ENCODE measurements at regions of chr14 and their contacts with region 1.

Region 1: GRCh38 chr14:62674563-62675237 is 370.6 kb downstream of the KCNH5 start:
- DNase-seq: no peak
- ATAC-seq: 0 out of 3 replicates have a peak, but pooled peaks have one; percentile 39
- H3K4me3 ChIP-seq: no peak overlapping the region
- H3K27ac ChIP-seq: no peak overlapping the region
- H3K4me1 ChIP-seq: no peaks in the 10 kb centered on the region
- H3K27me3 ChIP-seq: no peaks in the 10 kb centered on the region; a peak in 2 of 5 replicates
- CTCF ChIP-seq: no peak
- EP300 ChIP-seq: no peak
- POLR2A ChIP-seq: no peak
- RAD21 ChIP-seq: no peak

Region 2: GRCh38 chr14:62654641-62655040 is 20.1 kb before region 1 on chr14:
- CTCF ChIA-PET with region 1: no interaction called
- POLR2A ChIA-PET with region 1: no interaction called
- in situ Hi-C with region 1: no loop called
- intact Hi-C with region 1: no loop called
- DNase-seq: no peak
- ATAC-seq: no peak
- H3K4me3 ChIP-seq: no peak overlapping the region
- H3K27ac ChIP-seq: no peak overlapping the region
- H3K4me1 ChIP-seq: no peaks in the 10 kb centered on the region
- H3K27me3 ChIP-seq: no peaks in the 10 kb centered on the region; a peak in 1 of 5 replicates
- CTCF ChIP-seq: no peak
- EP300 ChIP-seq: no peak
- POLR2A ChIP-seq: no peak
- RAD21 ChIP-seq: no peak

Region 3: DNA sequence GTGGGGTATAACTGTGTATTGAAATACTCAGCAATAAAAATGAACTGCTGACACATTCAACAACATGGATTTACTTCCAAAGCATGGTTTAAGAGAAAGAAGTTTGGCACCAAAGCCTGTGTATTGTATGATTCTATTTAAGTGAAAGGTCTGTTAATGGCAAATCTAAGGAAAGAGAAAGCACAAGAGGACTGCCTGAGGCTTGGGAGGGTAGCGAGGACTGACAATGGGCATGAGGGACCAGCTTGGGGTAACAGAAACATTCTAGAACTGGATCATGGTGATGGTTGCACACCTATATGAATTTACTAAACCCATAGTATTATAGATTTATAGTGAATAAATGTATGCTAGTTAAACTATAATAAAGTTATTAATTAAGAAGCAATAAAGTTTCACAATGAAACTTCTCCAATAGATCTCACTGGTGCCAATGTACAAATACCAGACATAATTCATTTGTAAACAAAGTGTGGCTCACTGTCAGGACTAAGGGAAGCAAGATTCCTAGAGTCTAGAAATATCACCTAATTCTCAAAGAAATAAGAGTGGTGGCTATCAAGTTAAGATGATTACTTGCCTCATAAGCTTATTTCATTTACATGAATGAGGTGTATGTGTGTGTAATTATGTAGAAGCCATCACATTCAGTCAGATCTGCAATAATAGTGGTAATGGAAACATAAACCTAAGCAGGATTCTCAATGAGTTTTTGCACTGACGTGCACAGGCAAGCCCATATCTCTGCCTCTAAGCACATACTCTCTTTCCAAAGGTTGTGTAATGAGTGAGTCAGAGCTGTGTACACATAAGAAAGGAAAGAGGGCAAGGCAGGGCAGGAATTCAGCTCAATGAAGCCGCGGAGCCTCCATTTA is 17.1 kb after region 1 on chr14:
- CTCF ChIA-PET with region 1: no interaction called
- POLR2A ChIA-PET with region 1: no interaction called
- in situ Hi-C with region 1: no loop called
- intact Hi-C with region 1: loop called (anchors 1 kb)
- DNase-seq: peak; percentile 97
- ATAC-seq: peak; percentile 98
- H3K4me3 ChIP-seq: peak overlapping the region in 2 of 3 experiments; percentile 29 to 53; a peak in 2 of 6 replicates
- H3K27ac ChIP-seq: peak overlapping the region; percentile 92
- H3K4me1 ChIP-seq: peaks cover 72% of the 10 kb centered on the region
- H3K27me3 ChIP-seq: no peaks in the 10 kb centered on the region
- CTCF ChIP-seq: no peak
- EP300 ChIP-seq: peak; percentile 84 to 87
- POLR2A ChIP-seq: no peak
- RAD21 ChIP-seq: no peak